Heart left ventricle (tissue), 16 donors: ENCODE measurements at regions of chr3 and their contacts with region 1.

Region 1: GRCh38 chr3:138850151-138850550 is 15.4 kb upstream of the PIK3CB start:
- DNase-seq: peak in 4 of 5 donors; percentile 35 to 66 (median 42)
- ATAC-seq: no peak
- H3K4me3 ChIP-seq: no peak overlapping the region
- H3K27ac ChIP-seq: no peak overlapping the region
- H3K4me1 ChIP-seq: peaks cover 0 to 19% (median 0%) of the 10 kb centered on the region in 12 donors
- H3K27me3 ChIP-seq: no peaks in the 10 kb centered on the region
- CTCF ChIP-seq: no peak
- POLR2A ChIP-seq: no peak

Region 2: DNA sequence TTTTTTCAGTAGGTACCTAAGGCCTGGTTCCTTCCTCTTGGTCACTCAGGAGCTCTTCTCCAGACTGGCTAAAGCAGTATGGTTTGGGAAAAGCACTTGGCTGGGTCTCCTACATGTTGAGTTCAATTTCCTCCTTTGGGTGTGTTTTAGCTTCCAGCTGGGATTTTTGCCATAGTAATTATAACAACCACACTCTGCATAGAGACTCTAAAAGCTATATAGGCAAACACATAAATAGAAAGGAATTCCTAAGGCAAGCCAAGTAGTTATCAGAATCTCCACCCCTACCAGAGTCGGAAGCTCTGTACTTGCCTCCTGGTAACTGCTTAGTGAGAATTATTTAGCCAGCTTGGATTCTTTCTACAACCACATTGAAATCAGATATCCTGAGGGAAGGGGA is 48.1 kb after region 1 on chr3:
- intact Hi-C with region 1: loop called in 1 of 10 experiments (anchors 5 kb)
- DNase-seq: peak in 1 of 5 donors; percentile 20
- ATAC-seq: peak; percentile 87 to 95 (median 92)
- H3K4me3 ChIP-seq: no peak overlapping the region
- H3K27ac ChIP-seq: peak overlapping the region in 10 of 12 donors; percentile 12 to 73 (median 56)
- H3K4me1 ChIP-seq: peaks cover 7 to 26% (median 19%) of the 10 kb centered on the region in 12 donors
- H3K27me3 ChIP-seq: no peaks in the 10 kb centered on the region
- CTCF ChIP-seq: no peak
- POLR2A ChIP-seq: no peak